ENCODE measurements at regions of chr4 and their contacts with region 1.

Region 1: GRCh38 chr4:128354205-128354821 is 66.7 kb upstream of the PGRMC2 start:
- DNase-seq: peak; percentile 78 to 94
- H3K4me3 ChIP-seq: peak overlapping the region; percentile 19; the same call in 1 of the 2 replicates
- H3K27ac ChIP-seq: peak overlapping the region; percentile 90
- H3K4me1 ChIP-seq: peaks cover 43% of the 10 kb centered on the region
- H3K27me3 ChIP-seq: no peaks in the 10 kb centered on the region
- CTCF ChIP-seq: no peak

Region 2: GRCh38 chr4:128227991-128228571 is 126.2 kb before region 1 on chr4:
- CTCF ChIA-PET with region 1: interaction called, 3 read pairs
- POLR2A ChIA-PET with region 1: no interaction called
- intact Hi-C with region 1: loop called (anchors 1 kb)
- DNase-seq: peak; percentile 73 to 76
- H3K4me3 ChIP-seq: no peak overlapping the region
- H3K27ac ChIP-seq: peak overlapping the region; percentile 51
- H3K4me1 ChIP-seq: peaks cover 17% of the 10 kb centered on the region
- H3K27me3 ChIP-seq: no peaks in the 10 kb centered on the region
- CTCF ChIP-seq: no peak

Region 3: GRCh38 chr4:128311659-128312403 is 42.5 kb before region 1 on chr4:
- CTCF ChIA-PET with region 1: no interaction called
- POLR2A ChIA-PET with region 1: no interaction called
- intact Hi-C with region 1: loop called (anchors 1 kb)
- DNase-seq: no peak
- H3K4me3 ChIP-seq: no peak overlapping the region
- H3K27ac ChIP-seq: no peak overlapping the region
- H3K4me1 ChIP-seq: peaks cover 18% of the 10 kb centered on the region
- H3K27me3 ChIP-seq: no peaks in the 10 kb centered on the region
- CTCF ChIP-seq: no peak

Region 4: DNA sequence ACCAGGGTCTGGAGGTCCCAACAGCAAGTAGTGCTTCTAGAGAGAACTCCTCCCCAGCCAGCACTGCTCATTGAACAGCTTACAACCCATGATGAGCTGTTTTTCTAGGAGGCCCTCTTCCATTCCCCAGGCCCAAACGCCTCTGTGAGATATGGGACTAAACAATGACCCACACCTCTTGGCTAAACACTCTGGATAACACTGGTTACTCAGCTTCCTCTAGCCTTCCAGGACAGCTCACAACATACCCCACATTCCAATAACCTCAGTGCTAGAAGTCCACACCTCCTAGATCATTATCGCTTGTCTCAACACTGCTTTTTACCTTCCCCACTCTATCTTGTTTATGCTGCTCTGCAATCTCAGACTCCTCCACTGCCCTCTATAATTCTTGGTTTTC is 31.3 kb before region 1 on chr4:
- CTCF ChIA-PET with region 1: interaction called, 4 read pairs
- POLR2A ChIA-PET with region 1: interaction called, 5 read pairs
- intact Hi-C with region 1: loop called (anchors 1 kb)
- DNase-seq: peak; percentile 68 to 91
- H3K4me3 ChIP-seq: peak overlapping the region; percentile 33; the same call in 1 of the 2 replicates
- H3K27ac ChIP-seq: peak overlapping the region; percentile 89
- H3K4me1 ChIP-seq: peaks cover 40% of the 10 kb centered on the region
- H3K27me3 ChIP-seq: no peaks in the 10 kb centered on the region
- CTCF ChIP-seq: no peak

Region 5: DNA sequence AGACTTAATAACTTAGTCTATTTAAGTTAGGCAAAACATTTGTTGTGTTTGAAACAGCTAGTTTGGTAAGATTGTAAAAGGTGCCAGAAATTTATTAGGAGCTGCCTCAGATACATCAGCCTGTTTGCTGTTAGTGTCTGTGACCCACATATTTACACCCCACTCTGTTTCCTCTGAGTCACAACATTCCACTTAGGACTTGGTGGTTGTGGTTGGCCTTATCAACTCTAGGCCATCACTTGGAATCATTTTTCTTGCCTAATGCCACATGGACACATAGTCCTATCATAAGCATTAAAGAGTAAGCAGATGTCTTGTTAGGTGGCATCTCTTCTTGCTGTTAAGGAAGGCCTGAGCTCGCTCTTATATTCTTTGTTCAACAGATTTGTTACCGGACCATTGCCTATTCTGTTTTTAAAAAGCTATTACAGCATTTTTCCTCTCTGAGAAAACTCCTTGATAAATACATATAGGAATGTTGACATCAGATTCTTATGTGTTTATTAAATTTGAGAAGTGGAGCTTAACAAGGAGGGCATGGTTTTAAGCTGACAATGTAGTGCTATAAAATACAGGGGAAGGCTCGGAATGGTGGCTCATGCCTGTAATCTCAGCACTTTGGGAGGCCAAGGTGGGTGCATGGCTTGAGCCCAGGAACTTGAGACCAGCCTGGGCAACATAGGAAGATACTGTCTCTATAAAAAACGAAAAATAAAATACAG is 15.5 kb before region 1 on chr4:
- CTCF ChIA-PET with region 1: no interaction called
- POLR2A ChIA-PET with region 1: interaction called, 4 read pairs
- intact Hi-C with region 1: loop called (anchors 1 kb)
- DNase-seq: peak; percentile 50 to 86
- H3K4me3 ChIP-seq: no peak overlapping the region
- H3K27ac ChIP-seq: peak overlapping the region; percentile 57
- H3K4me1 ChIP-seq: peaks cover 25% of the 10 kb centered on the region
- H3K27me3 ChIP-seq: no peaks in the 10 kb centered on the region
- CTCF ChIP-seq: no peak

Region 6: GRCh38 chr4:128386761-128387599 is 32.7 kb after region 1 on chr4:
- CTCF ChIA-PET with region 1: no interaction called
- POLR2A ChIA-PET with region 1: no interaction called
- intact Hi-C with region 1: loop called (anchors 1 kb)
- DNase-seq: peak; percentile 77 to 87
- H3K4me3 ChIP-seq: no peak overlapping the region
- H3K27ac ChIP-seq: peak overlapping the region; percentile 63
- H3K4me1 ChIP-seq: peaks cover 33% of the 10 kb centered on the region
- H3K27me3 ChIP-seq: no peaks in the 10 kb centered on the region
- CTCF ChIP-seq: no peak

Region 7: DNA sequence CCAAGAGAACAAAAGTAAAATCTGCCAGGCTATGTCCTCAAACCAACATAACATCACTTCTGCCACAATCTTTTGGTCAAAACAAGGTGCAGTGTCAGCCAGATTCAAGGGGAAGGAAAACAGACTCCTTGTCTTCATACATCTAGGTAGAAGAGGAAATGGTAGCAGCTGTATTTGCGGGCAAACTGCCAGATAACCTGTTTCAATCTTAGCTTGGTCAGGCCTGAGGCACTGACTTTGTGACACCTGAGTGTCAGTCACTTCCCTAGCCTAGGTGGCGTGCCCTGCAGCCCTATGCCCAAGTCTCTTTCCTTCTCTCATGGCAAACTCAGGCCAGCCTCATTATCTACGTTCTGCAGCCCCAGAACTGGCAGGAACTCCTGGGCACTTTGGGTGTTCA is 309.0 kb after region 1 on chr4:
- CTCF ChIA-PET with region 1: no interaction called
- POLR2A ChIA-PET with region 1: no interaction called
- intact Hi-C with region 1: no loop called
- DNase-seq: peak in 1 of 2 experiments; percentile 14
- H3K4me3 ChIP-seq: no peak overlapping the region
- H3K27ac ChIP-seq: no peak overlapping the region
- H3K4me1 ChIP-seq: no peaks in the 10 kb centered on the region
- H3K27me3 ChIP-seq: no peaks in the 10 kb centered on the region
- CTCF ChIP-seq: no peak

Measured in PC-9 (cell line).